ENCODE measurements at regions of chr6 and their contacts with region 1.

Region 1: GRCh38 chr6:47309291-47310130 is at the start of gene TNFRSF21:
- DNase-seq: peak; percentile 94
- ATAC-seq: peak; percentile 99
- total RNA-seq, gene TNFRSF21: 10.9 TPM

Region 2: GRCh38 chr6:46848684-46849360 is 460.7 kb before region 1 on chr6:
- intact Hi-C with region 1: loop called (anchors 5 kb)
- DNase-seq: peak; percentile 93
- ATAC-seq: peak; percentile 98

Region 3: DNA sequence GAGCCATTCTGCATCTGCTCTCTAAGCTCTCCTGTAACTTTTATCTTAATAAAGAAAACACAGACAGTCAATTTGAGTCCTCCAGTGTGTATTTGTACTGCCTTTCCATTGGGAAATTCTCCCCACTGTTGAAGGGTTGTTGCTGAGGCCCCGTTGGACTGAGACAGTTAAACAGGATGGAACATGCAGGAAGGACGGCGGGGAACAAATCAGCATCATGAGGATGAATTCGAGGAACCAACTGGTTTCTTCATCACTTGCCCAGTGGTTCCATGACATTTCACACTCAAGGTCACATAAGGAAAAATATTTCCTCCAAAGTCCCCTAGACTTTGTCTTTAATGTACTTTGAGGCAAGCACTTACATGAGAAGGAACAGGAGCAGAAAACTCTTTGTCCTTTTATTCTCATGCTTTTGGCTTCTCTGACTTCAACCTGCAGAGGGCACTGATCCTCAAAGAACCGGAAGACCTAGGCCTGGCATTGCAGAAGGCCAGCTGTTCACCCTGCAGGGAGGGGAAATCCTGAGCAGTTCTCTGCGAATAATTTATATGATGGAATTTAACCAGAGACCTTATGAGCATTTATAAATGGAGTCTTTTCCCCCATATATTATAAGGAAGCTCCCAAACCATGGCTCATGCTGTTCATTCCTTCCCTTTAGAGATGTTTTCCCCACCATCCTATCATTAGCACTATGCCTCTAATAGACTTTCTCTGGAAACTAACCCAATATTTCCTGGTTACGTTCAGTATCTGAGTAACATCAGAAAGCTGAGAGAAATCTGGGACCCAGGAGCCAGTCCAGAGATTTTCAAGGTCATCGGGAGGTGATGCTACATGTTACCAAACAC is 212.2 kb before region 1 on chr6:
- intact Hi-C with region 1: loop called (anchors 2 kb)
- DNase-seq: no peak
- ATAC-seq: peak; percentile 86

Region 4: DNA sequence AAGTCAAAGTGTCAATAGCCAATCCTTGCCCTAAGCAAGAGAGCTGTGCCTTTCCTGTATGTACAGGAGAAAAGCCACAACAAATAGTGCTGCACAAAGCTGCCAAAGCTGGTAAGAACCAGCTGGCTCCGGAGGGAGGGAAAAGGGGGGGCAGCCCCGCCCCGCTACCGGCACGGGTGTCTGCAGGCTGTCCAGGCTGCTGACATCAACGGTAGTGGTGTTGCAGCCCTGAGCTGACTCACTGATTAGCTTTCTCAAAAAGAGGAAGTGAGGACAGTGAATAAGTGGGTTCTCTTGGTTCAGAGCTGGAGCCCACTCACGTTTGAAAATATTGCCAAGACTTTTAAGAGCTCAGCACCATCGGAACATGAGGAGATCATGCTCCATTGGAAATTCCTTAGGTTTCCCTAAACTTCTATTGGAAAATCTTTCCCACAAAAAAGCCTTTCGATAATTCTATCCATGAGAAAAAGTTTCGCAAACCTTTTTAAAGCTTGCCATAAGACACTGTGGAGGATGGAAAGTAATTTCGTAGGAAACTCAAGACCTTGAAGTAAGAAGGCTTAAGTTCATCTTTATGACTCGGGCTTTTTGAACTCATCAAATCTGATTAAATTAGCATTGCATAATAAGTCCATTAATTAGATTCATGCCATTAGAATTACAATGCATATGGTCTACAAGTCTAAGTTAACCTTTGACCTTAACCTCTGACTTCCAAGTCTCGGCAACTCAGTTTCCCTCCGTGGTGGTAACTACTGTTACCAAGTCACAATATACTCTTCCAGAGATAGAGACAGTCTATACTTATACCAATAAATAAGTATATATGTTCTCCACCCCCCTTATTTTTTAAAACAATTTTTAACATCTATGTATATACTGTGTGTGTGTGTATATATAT is 66.8 kb before region 1 on chr6:
- intact Hi-C with region 1: loop called (anchors 5 kb)
- DNase-seq: peak; percentile 92
- ATAC-seq: peak; percentile 96